ENCODE measurements at regions of chr20 and their contacts with region 1.

Region 1: DNA sequence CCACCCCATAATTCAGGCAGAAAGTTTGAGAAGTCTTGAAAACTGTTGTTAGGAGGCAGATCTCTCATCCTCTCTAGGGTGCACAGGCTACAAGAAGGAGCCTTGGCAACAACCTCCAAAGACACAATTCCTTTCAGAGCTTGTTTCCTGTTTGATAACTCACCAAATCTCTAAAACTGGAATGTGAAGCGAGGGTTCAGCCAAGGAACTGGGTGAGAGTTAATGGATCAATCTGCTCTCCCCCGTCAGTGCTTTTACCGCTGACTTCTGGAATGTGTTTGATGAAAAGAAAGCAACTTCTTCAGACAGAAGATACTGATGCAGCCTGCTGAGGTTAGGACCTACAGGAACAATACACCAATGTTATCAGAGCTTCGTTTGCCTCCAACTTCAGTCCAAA is 171.8 kb upstream of the BMP2 start:
- DNase-seq: no peak
- ATAC-seq: no peak
- H3K4me3 ChIP-seq: no peak overlapping the region
- H3K27ac ChIP-seq: no peak overlapping the region
- H3K4me1 ChIP-seq: no peaks in the 10 kb centered on the region
- H3K27me3 ChIP-seq: no peaks in the 10 kb centered on the region
- CTCF ChIP-seq: no peak
- EP300 ChIP-seq: no peak
- POLR2A ChIP-seq: no peak
- RAD21 ChIP-seq: no peak

Region 2: DNA sequence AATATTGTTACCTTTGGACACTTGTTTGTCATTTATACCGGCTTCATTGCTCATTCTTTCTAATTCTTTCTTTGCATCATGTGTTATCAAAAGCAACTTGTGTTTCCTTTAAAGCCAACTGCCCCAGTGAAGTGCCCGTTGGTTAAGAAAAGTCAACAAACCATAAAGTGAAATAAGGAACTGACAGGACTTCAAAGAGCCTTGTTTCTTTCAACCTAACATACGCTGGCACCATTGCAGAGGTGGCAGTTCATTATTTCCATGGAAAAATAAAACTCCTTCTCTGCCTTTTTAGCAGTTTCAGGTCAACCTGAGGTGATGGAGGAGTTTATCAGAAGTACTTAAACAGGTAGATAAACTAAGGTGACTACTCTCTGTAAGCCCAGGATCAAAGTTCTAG is 501.6 kb before region 1 on chr20:
- CTCF ChIA-PET with region 1: no interaction called
- POLR2A ChIA-PET with region 1: no interaction called
- RAD21 ChIA-PET with region 1: no interaction called
- SMC1A ChIA-PET with region 1: no interaction called
- in situ Hi-C with region 1: no loop called
- intact Hi-C with region 1: no loop called
- DNase-seq: peak; percentile 7
- ATAC-seq: peak; percentile 76
- H3K4me3 ChIP-seq: no peak overlapping the region
- H3K27ac ChIP-seq: no peak overlapping the region
- H3K4me1 ChIP-seq: no peaks in the 10 kb centered on the region
- H3K27me3 ChIP-seq: no peaks in the 10 kb centered on the region
- CTCF ChIP-seq: no peak
- EP300 ChIP-seq: 0 out of 4 replicates have a peak, but pooled peaks of 1 of the 2 experiments have one; percentile 9
- POLR2A ChIP-seq: no peak
- RAD21 ChIP-seq: no peak

Region 3: DNA sequence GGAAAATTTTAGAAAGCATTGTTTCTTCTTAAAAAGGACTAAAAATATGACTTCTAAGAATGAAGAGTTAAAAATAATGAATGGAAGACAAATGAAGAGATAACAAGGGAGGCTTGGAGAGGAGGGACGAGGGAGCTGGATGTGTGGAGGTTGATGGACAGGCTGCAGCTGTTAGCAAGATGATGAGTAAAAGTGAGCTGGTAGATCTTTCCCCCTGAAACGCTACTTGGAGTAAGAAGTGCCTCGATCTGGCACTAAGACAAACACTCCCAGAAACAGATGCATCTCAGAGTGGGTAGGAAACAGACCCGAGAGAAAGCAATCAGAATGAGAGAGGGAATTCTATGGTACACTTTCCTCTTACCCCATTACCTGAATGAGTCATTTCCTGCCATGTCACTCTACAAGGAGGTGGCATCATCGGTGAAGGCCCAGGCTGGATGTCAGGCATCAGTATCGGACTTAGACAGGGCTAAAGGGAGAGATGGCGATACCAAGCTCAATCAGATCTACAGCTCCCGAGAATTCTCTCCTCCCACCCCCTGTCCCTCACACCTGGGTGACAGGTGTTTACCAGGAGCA is 17.7 kb after region 1 on chr20:
- CTCF ChIA-PET with region 1: interaction called, 11 read pairs
- POLR2A ChIA-PET with region 1: interaction called, 6 read pairs
- RAD21 ChIA-PET with region 1: interaction called, 10 read pairs
- SMC1A ChIA-PET with region 1: interaction called, 17 read pairs
- in situ Hi-C with region 1: no loop called
- intact Hi-C with region 1: no loop called
- DNase-seq: no peak
- ATAC-seq: peak; percentile 92
- H3K4me3 ChIP-seq: no peak overlapping the region
- H3K27ac ChIP-seq: no peak overlapping the region
- H3K4me1 ChIP-seq: no peaks in the 10 kb centered on the region
- H3K27me3 ChIP-seq: no peaks in the 10 kb centered on the region
- CTCF ChIP-seq: no peak
- EP300 ChIP-seq: no peak
- POLR2A ChIP-seq: no peak
- RAD21 ChIP-seq: no peak

Region 4: GRCh38 chr20:7151676-7152470 is 556.2 kb after region 1 on chr20:
- CTCF ChIA-PET with region 1: no interaction called
- POLR2A ChIA-PET with region 1: no interaction called
- RAD21 ChIA-PET with region 1: no interaction called
- SMC1A ChIA-PET with region 1: no interaction called
- in situ Hi-C with region 1: no loop called
- intact Hi-C with region 1: no loop called
- DNase-seq: no peak
- ATAC-seq: no peak
- H3K4me3 ChIP-seq: no peak overlapping the region
- H3K27ac ChIP-seq: no peak overlapping the region
- H3K4me1 ChIP-seq: no peaks in the 10 kb centered on the region
- H3K27me3 ChIP-seq: no peaks in the 10 kb centered on the region
- CTCF ChIP-seq: no peak
- EP300 ChIP-seq: no peak
- POLR2A ChIP-seq: no peak
- RAD21 ChIP-seq: no peak